Mammary epithelial cell (primary cell): ENCODE measurements at regions of chr7 and their contacts with region 1.

Region 1: DNA sequence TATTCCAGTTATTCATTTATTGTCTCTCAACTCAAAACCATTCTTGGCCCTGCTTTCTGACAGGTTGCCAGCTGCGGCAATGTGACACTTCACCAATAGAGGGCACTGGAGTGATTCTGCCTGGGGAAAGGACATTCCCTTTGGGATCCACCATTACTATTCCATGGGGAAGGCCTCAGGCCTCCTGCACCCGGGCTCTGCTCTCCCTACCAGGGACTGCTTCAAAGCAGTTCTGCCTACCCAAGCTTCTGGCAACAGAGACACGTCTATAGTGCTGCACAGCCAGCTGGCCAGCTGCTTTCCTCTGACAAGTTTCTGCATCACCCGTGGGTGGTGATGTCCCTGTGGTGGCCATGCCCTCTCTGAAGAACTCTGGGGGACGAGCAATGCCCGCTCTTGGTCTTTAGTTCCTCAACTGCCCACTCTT is 163.8 kb downstream of the ELMO1 start:
- DNase-seq: peak; percentile 28
- H3K4me3 ChIP-seq: no peak overlapping the region
- H3K27ac ChIP-seq: no peak overlapping the region
- H3K4me1 ChIP-seq: no peaks in the 10 kb centered on the region
- H3K27me3 ChIP-seq: no peaks in the 10 kb centered on the region
- CTCF ChIP-seq: peak; percentile 43 to 58

Region 2: GRCh38 chr7:36651404-36651803 is 633.4 kb before region 1 on chr7:
- CTCF ChIA-PET with region 1: interaction called, 13 read pairs
- dilution Hi-C with region 1: no loop called
- in situ Hi-C with region 1: no loop called
- intact Hi-C with region 1: no loop called
- DNase-seq: peak; percentile 73
- H3K4me3 ChIP-seq: no peak overlapping the region
- H3K27ac ChIP-seq: peak overlapping the region; percentile 52
- H3K4me1 ChIP-seq: peaks cover 23% of the 10 kb centered on the region
- H3K27me3 ChIP-seq: no peaks in the 10 kb centered on the region
- CTCF ChIP-seq: no peak

Region 3: DNA sequence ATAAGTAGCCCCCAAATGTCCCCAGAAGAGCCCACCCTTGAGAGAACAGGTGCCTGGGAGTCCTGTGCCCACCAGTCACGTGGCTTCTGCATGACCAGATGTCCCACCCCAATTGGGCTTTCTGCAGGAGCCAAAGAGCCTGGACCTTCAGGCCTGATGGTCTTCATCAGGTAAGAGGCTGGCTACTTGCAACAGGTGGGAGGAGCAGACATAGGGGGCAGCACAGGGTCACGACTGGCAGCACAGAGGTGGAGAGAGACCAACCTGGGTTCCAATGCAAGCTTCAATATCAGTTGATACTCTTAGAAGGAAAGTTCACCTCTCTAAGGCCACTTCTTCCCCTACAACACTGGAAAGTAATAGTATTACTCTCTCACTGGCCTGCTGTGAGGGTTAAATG is 124.2 kb before region 1 on chr7:
- CTCF ChIA-PET with region 1: no interaction called
- dilution Hi-C with region 1: no loop called
- in situ Hi-C with region 1: no loop called
- intact Hi-C with region 1: no loop called
- DNase-seq: no peak
- H3K4me3 ChIP-seq: no peak overlapping the region
- H3K27ac ChIP-seq: no peak overlapping the region
- H3K4me1 ChIP-seq: no peaks in the 10 kb centered on the region
- H3K27me3 ChIP-seq: no peaks in the 10 kb centered on the region
- CTCF ChIP-seq: no peak

Region 4: GRCh38 chr7:37448636-37449361 is 164.0 kb after region 1 on chr7 and contains the start of gene ELMO1:
- CTCF ChIA-PET with region 1: no interaction called
- dilution Hi-C with region 1: no loop called
- in situ Hi-C with region 1: no loop called
- intact Hi-C with region 1: loop called (anchors 1 kb)
- DNase-seq: peak; percentile 57
- H3K4me3 ChIP-seq: peak within 1 kb of the TSS; percentile 27 to 46 (median 36)
- H3K27ac ChIP-seq: no peak within 1 kb of the TSS
- H3K4me1 ChIP-seq: peaks cover 13% of the 10 kb centered on the region
- H3K27me3 ChIP-seq: peaks cover 22% of the 10 kb centered on the region
- CTCF ChIP-seq: peak; percentile 14 to 33
- total RNA-seq, gene ELMO1: 9.5 to 12.1 TPM

Region 5: GRCh38 chr7:37510043-37510634 is 225.3 kb after region 1 on chr7:
- CTCF ChIA-PET with region 1: no interaction called
- dilution Hi-C with region 1: no loop called
- in situ Hi-C with region 1: no loop called
- intact Hi-C with region 1: loop called (anchors 1 kb)
- DNase-seq: no peak
- H3K4me3 ChIP-seq: no peak overlapping the region
- H3K27ac ChIP-seq: no peak overlapping the region
- H3K4me1 ChIP-seq: no peaks in the 10 kb centered on the region
- H3K27me3 ChIP-seq: no peaks in the 10 kb centered on the region
- CTCF ChIP-seq: peak; percentile 60 to 69

Region 6: DNA sequence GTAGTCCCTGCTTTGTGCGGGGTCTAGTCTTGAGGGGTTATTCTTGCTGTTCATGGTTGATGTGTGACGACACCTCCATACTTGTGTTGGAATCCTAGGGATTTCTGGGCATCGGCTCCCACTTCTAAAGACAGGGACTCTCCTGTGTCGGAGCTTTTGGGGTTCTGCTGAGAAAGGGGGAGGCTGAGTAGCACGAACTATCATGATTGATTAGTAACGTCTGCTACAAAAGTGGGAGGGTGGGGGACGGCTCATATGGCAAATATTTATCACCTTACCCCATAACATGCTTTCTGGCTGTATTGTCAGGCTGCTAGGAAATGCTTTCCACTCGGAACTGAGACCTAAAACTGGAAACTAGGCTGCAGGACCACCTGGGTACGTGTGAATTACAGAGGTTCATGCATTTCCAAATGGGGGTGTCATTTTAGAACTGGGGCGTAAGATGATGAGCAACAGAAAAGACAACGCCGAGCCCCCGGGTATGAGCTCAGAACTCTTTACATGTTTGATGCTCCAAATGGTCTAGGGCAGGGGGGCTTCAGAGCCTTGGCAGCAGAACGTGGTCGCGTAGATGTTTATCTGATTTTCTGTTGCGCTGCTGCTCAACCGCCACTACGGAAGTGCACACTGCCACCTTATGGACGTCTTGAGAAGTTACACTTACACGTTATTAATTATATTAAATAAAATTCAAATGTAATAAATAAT is 548.4 kb after region 1 on chr7:
- CTCF ChIA-PET with region 1: no interaction called
- dilution Hi-C with region 1: no loop called
- in situ Hi-C with region 1: no loop called
- intact Hi-C with region 1: loop called (anchors 1 kb)
- DNase-seq: peak; percentile 6
- H3K4me3 ChIP-seq: peak overlapping the region; percentile 28 to 31 (median 28)
- H3K27ac ChIP-seq: no peak overlapping the region
- H3K4me1 ChIP-seq: no peaks in the 10 kb centered on the region
- H3K27me3 ChIP-seq: no peaks in the 10 kb centered on the region
- CTCF ChIP-seq: peak; percentile 48 to 66